H1 (cell line): ENCODE measurements at regions of chr11 and their contacts with region 1.

Region 1: GRCh38 chr11:27296497-27296896 is 66.5 kb downstream of the CCDC34 start:
- DNase-seq: no peak
- H3K4me3 ChIP-seq: no peak overlapping the region
- H3K27ac ChIP-seq: no peak overlapping the region
- H3K4me1 ChIP-seq: peaks cover 0 to 3% (median 0%) of the 10 kb centered on the region in 4 experiments; a peak in 2 of 7 replicates
- H3K27me3 ChIP-seq: no peaks in the 10 kb centered on the region
- CTCF ChIP-seq: peak in 2 of 3 experiments; percentile 53 to 75; a peak in 2 of 4 replicates
- EP300 ChIP-seq: no peak
- POLR2A ChIP-seq: no peak
- RAD21 ChIP-seq: peak; percentile 74 to 75

Region 2: DNA sequence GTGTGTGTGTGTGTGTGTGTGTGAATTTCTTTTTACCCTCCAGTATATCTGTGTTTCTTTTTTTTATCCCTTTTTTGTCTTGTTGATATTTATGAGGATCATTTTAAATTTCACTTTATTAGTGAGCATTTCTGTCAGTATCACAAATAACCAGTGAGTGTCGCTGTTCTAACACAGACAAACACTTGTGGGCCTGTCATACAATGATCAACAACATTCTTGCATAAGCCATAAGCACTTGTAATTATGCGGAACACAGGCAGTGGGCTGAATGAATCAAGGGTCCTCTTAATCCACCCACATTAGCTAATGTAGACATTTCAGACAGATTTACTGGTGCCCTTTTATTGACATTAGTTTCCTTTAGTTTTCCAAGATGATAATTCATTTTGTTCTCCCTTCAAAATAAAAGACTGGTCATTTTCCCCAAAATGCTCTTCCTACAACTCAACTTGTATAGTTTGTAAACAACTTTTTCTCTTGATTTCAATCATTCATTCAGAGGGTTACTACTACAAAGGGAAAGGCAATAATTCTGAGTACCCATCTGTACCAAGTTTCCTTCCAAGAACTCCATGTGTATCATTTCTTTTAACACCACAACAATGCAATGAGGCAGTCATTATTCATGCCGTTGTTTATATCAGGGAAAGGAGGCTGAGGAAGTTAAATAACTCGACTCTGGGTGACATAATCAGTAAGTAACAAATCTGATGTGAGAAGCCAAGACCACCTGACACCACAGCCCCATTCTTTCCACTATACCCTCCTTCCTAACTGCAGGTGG is 999.1 kb before region 1 on chr11:
- CTCF ChIA-PET with region 1: no interaction called
- POLR2A ChIA-PET with region 1: no interaction called
- DNase-seq: no peak
- H3K4me3 ChIP-seq: no peak overlapping the region
- H3K27ac ChIP-seq: no peak overlapping the region
- H3K4me1 ChIP-seq: no peaks in the 10 kb centered on the region
- H3K27me3 ChIP-seq: no peaks in the 10 kb centered on the region
- CTCF ChIP-seq: peak in 2 of 3 experiments; percentile 49 to 51; a peak in 3 of 4 replicates
- EP300 ChIP-seq: no peak
- POLR2A ChIP-seq: no peak
- RAD21 ChIP-seq: peak; percentile 76 to 78

Region 3: GRCh38 chr11:27111896-27112295 is 184.6 kb before region 1 on chr11:
- CTCF ChIA-PET with region 1: no interaction called
- POLR2A ChIA-PET with region 1: no interaction called
- DNase-seq: no peak
- H3K4me3 ChIP-seq: no peak overlapping the region
- H3K27ac ChIP-seq: no peak overlapping the region
- H3K4me1 ChIP-seq: no peaks in the 10 kb centered on the region
- H3K27me3 ChIP-seq: no peaks in the 10 kb centered on the region
- CTCF ChIP-seq: no peak
- EP300 ChIP-seq: no peak
- POLR2A ChIP-seq: no peak
- RAD21 ChIP-seq: no peak

Region 4: DNA sequence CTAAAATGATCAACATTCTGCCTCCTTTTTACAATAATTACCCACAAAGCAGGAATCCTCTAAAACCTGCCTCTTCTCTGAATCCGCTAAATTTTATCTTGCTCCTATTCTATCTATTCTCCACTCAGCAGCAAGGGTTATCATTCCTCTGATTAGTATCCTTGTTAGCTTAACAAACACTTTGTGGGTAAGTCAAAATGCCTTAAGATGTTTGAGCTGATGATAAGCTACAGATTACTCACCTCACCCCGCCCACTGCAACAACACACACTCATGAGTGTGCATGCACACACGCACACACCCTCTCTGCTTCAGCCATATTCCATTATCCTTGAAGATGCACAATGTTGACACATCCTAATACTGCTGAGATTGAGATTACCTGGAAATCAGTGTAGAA is 125.1 kb before region 1 on chr11:
- CTCF ChIA-PET with region 1: no interaction called
- POLR2A ChIA-PET with region 1: no interaction called
- DNase-seq: no peak
- H3K4me3 ChIP-seq: no peak overlapping the region
- H3K27ac ChIP-seq: no peak overlapping the region
- H3K4me1 ChIP-seq: no peaks in the 10 kb centered on the region
- H3K27me3 ChIP-seq: peaks cover 0 to 1% (median 0%) of the 10 kb centered on the region in 4 experiments; a peak in 1 of 7 replicates
- CTCF ChIP-seq: no peak
- EP300 ChIP-seq: no peak
- POLR2A ChIP-seq: no peak
- RAD21 ChIP-seq: no peak

Region 5: GRCh38 chr11:27183672-27184457 is 112.6 kb before region 1 on chr11:
- CTCF ChIA-PET with region 1: interaction called, 20 read pairs
- POLR2A ChIA-PET with region 1: no interaction called
- DNase-seq: no peak
- H3K4me3 ChIP-seq: no peak overlapping the region
- H3K27ac ChIP-seq: no peak overlapping the region
- H3K4me1 ChIP-seq: no peaks in the 10 kb centered on the region
- H3K27me3 ChIP-seq: no peaks in the 10 kb centered on the region
- CTCF ChIP-seq: peak in 2 of 3 experiments; percentile 59 to 61; a peak in 2 of 4 replicates
- EP300 ChIP-seq: no peak
- POLR2A ChIP-seq: no peak
- RAD21 ChIP-seq: peak; percentile 91 to 92

Region 6: DNA sequence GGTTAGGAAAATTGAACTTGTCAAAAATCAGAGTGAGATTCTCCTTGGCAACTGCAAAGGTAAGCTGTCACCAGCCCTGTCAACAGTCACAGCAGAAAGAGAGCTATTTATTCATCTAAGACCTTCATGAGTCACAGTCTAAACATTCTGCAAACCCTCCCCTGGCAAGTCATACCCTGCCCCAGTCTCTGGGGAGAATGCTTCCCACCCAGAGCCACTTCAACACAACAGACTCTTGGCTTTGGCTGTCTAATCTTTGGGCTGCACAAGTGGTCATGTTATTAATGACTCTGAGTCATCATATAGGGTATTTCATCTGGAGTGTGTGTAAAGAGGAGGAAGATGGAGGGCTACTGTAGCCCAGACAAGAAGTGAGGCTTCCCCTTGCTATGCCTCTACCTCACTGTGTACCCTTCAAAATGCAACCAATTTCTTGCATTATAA is 86.9 kb before region 1 on chr11:
- CTCF ChIA-PET with region 1: interaction called, 82 read pairs
- POLR2A ChIA-PET with region 1: no interaction called
- DNase-seq: no peak
- H3K4me3 ChIP-seq: no peak overlapping the region
- H3K27ac ChIP-seq: no peak overlapping the region
- H3K4me1 ChIP-seq: no peaks in the 10 kb centered on the region
- H3K27me3 ChIP-seq: no peaks in the 10 kb centered on the region
- CTCF ChIP-seq: no peak
- EP300 ChIP-seq: no peak
- POLR2A ChIP-seq: no peak
- RAD21 ChIP-seq: no peak

Region 7: GRCh38 chr11:27281740-27282590 is 14.5 kb before region 1 on chr11:
- CTCF ChIA-PET with region 1: interaction called, 34 read pairs
- POLR2A ChIA-PET with region 1: no interaction called
- DNase-seq: no peak
- H3K4me3 ChIP-seq: no peak overlapping the region
- H3K27ac ChIP-seq: no peak overlapping the region
- H3K4me1 ChIP-seq: no peaks in the 10 kb centered on the region; a peak in 1 of 7 replicates
- H3K27me3 ChIP-seq: no peaks in the 10 kb centered on the region
- CTCF ChIP-seq: no peak
- EP300 ChIP-seq: no peak
- POLR2A ChIP-seq: no peak
- RAD21 ChIP-seq: no peak

Region 8: DNA sequence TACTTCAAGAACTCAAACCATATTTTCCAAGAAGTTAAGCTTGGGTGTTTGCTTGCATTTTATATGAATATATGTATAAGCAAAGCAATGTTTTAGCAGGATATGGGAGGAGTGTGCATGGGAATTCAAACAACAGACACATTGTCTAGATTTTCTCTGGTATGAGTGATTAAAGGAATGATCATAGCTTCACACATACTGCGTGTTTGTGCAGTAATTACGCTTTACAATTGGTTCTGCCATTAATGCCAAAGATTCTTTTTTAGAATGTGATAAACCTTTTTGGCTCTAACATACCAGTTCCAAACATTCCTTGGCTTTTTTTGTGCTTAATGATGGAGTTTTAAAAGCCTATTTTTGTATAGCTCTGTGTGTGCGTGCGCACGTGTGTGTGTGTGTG is 12.5 kb after region 1 on chr11:
- CTCF ChIA-PET with region 1: interaction called, 28 read pairs
- POLR2A ChIA-PET with region 1: interaction called, 4 read pairs
- DNase-seq: no peak
- H3K4me3 ChIP-seq: no peak overlapping the region
- H3K27ac ChIP-seq: no peak overlapping the region
- H3K4me1 ChIP-seq: peaks cover 0 to 3% (median 1%) of the 10 kb centered on the region in 4 experiments; a peak in 3 of 7 replicates
- H3K27me3 ChIP-seq: no peaks in the 10 kb centered on the region
- CTCF ChIP-seq: no peak
- EP300 ChIP-seq: no peak
- POLR2A ChIP-seq: no peak
- RAD21 ChIP-seq: no peak

Region 9: GRCh38 chr11:27362749-27363575 is 66.5 kb after region 1 on chr11 and contains the start of gene CCDC34:
- CTCF ChIA-PET with region 1: interaction called, 11 read pairs
- POLR2A ChIA-PET with region 1: interaction called, 3 read pairs
- DNase-seq: peak; percentile 87 to 91
- H3K4me3 ChIP-seq: peak within 1 kb of the TSS; percentile 69 to 89 (median 82)
- H3K27ac ChIP-seq: peak within 1 kb of the TSS; percentile 54
- H3K4me1 ChIP-seq: peaks cover 0 to 9% (median 2%) of the 10 kb centered on the region in 4 experiments; a peak in 3 of 7 replicates
- H3K27me3 ChIP-seq: no peaks in the 10 kb centered on the region
- CTCF ChIP-seq: no peak
- EP300 ChIP-seq: 0 out of 3 replicates have a peak, but pooled peaks of 1 of the 2 experiments have one; percentile 27
- POLR2A ChIP-seq: peak; percentile 48 to 58; a peak in 2 of 3 replicates
- RAD21 ChIP-seq: no peak
- total RNA-seq, gene CCDC34: 21.5 and 24.3 TPM in 2 replicates

Region 10: DNA sequence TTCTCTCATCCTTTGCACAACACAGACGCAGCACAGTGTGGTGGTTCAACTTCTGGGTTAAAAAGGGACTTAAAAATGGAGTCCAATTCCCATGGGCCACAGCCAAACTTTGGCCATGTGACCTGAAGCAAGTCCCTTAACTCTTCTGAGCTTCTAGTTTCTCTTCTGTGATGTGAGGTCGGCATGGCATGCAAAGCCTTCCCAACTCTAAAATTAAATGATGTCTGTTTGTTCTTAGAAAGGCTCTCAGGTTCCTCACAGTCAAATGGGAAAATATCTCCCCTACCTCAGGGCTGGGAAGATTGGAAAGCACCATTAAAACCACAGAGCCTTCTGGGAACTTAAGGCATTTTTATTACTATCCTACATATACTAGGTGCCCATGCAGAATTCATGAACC is 137.2 kb after region 1 on chr11:
- CTCF ChIA-PET with region 1: no interaction called
- POLR2A ChIA-PET with region 1: no interaction called
- DNase-seq: no peak
- H3K4me3 ChIP-seq: no peak overlapping the region
- H3K27ac ChIP-seq: no peak overlapping the region
- H3K4me1 ChIP-seq: peaks cover 3 to 18% (median 13%) of the 10 kb centered on the region in 4 experiments; a peak in 4 of 7 replicates
- H3K27me3 ChIP-seq: no peaks in the 10 kb centered on the region
- CTCF ChIP-seq: no peak
- EP300 ChIP-seq: no peak
- POLR2A ChIP-seq: no peak
- RAD21 ChIP-seq: no peak